ENCODE measurements at regions of chr1 and their contacts with region 1.

Region 1: DNA sequence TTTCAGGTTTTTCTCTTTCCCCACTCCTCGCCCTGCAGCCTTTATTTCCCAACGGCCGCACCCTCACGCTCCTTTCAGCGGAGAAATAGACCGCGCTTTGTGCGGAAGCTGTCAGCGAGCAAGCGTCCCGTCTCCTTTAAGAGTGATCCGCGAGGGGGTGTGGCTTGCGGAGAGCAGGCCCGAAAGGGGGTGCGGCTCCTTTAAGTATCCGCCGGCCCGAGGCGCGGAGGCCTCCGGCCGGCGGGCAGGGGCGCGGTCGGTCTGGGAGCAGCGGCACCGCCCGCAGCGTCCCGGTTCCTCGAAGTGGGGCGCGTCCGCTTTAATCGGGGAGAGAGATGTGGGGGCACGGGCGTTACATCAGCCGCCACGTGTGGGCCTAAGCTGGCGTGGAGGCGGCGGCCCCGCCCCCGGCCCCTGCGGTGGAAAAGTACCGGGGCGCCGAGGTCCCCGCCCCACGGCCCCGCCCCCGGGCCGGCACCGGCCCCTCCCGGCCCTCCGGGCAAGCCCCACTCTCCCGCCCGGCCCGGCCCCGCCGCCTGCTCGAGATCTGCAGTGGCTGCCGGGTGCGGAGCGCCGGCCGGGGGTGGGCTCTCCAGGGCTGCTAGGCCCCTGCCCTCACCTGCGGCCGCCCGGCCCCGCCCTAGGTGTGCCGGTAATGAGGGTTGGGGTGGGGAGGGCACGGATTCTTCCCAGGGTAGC is 1.2 kb downstream of the SLC6A9 start:
- DNase-seq: peak; percentile 80 to 93
- H3K4me3 ChIP-seq: peak overlapping the region; percentile 97
- H3K27ac ChIP-seq: peak overlapping the region; percentile 91
- H3K4me1 ChIP-seq: peaks cover 57% of the 10 kb centered on the region
- H3K27me3 ChIP-seq: no peaks in the 10 kb centered on the region
- CTCF ChIP-seq: no peak

Region 2: GRCh38 chr1:43454266-43455011 is 575.6 kb before region 1 on chr1:
- CTCF ChIA-PET with region 1: no interaction called
- POLR2A ChIA-PET with region 1: no interaction called
- intact Hi-C with region 1: loop called (anchors 10 kb)
- DNase-seq: peak; percentile 77 to 89
- H3K4me3 ChIP-seq: peak overlapping the region; percentile 71
- H3K27ac ChIP-seq: peak overlapping the region; percentile 70
- H3K4me1 ChIP-seq: peaks cover 11% of the 10 kb centered on the region
- H3K27me3 ChIP-seq: no peaks in the 10 kb centered on the region
- CTCF ChIP-seq: no peak

Region 3: DNA sequence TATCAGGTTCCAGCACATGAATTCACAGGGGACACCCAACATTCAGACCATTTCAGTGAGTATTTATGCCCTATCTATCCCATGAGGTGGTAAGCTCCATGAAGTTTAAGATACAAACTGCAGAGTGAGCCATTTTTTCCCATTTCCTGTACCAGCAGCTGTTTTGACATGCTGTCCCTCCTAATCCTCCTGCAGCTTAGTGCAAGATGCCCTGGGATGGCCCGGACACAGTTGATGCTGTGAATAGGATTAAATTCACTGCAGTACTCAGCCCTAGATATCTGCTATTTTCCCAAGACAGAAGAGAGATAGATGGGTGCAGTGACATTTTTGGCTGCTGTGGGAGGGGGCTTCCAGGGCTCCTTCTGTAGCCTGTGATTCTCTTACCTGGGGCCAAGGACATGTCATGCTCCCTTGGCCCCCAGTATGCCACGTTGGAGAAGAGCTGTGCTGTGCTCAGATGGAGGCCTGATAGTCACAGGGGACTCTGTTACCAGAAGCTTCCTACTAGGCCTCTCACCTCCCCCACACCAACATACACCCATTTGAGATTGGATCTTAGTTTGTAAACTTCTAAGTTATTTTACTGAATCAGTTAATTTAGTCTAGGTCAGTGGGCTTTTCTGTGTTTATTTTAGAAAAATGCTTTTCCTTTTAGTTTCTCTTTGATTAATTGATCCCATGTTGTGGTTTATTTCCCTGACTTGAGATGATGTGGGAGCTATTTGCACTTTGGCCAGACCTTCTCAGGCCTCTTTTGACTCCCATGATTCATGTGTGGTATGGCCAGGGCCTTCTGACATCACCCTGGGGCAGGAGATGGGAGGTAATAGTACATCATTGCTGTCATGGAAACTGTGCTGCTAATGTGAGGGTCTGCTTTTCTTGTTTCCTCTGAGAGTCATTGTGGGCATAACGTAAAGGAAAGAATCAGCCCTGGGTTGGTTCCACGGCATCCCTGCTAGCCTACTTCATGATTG is 230.1 kb before region 1 on chr1:
- CTCF ChIA-PET with region 1: no interaction called
- POLR2A ChIA-PET with region 1: no interaction called
- intact Hi-C with region 1: no loop called
- DNase-seq: no peak
- H3K4me3 ChIP-seq: no peak overlapping the region
- H3K27ac ChIP-seq: no peak overlapping the region
- H3K4me1 ChIP-seq: no peaks in the 10 kb centered on the region
- H3K27me3 ChIP-seq: no peaks in the 10 kb centered on the region
- CTCF ChIP-seq: no peak

Region 4: DNA sequence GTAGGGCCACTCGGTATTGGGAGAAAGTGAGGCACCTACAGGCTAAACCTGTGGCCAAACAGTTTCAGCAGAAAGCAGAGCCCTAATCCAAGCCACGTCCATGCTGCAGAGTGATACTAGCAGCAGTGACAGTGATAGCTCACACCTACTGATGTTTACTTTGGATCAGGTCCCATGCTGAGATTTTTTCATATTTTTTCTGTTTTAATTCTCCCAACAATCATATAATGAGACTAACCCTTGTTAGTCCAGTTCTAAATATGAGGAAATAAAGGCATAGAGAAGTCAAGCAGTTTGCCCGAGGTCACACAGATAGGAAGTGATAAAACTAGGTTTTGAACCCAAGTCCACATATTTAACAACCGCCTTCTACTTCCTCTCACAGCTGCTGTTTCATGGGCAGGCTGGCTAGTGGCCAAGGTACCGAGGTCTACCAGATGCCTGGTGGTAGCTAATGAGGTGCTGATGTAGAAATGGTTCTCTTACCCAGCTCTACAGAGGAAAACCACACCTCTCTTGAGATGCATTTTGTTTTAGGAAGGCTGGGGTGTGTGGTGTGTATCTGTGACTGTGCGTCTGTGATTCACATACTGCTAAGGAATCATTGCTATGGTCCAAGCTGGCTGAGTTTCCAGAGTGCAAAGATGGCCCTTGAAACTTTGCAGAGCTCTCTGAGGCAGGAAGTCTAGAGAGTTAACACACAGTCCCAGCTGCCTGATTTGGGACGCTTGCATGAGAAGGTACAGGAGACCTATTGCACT is 176.7 kb before region 1 on chr1:
- CTCF ChIA-PET with region 1: no interaction called
- POLR2A ChIA-PET with region 1: no interaction called
- intact Hi-C with region 1: loop called (anchors 10 kb)
- DNase-seq: peak; percentile 79 to 83
- H3K4me3 ChIP-seq: no peak overlapping the region
- H3K27ac ChIP-seq: peak overlapping the region; percentile 54
- H3K4me1 ChIP-seq: peaks cover 31% of the 10 kb centered on the region
- H3K27me3 ChIP-seq: no peaks in the 10 kb centered on the region
- CTCF ChIP-seq: no peak

Region 5: DNA sequence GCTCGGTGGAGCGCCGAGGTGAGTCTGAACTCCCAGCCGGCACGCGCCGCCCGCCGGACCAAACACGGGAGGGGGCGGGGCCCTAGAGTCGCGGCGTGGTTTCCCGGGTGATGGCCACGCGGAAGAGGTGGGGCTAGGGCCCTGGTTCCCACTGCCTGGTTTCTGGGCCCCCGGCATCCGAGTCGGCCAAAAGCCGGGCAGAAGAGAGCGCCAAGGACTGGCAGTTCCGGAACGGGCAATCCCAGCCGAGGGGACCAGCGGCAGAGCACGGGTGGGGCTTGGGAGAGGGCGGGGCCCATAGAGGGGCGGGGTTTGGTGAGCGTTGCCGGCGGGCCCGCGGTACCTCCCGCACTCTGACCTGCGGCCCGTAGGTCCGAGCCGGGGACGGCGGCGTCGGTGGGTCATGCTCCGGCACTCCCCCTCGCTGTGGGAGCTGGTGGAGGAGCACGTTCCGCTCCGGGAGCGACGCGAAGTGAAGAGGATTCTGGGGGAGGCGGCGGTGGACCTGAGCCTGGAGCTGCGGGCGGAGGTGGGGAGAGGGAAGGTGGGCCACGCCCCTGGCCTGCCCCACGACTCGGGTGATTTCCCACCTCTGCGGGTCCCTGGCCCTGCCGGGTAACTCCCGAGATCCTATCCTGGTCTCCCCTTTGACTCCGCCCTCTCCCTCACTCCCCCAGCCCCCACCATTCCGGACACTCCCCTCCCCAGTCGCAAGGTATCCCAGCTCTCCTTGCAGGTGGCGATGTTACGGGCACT is 38.4 kb before region 1 on chr1 and contains the start of gene CCDC24:
- CTCF ChIA-PET with region 1: interaction called, 6 read pairs
- POLR2A ChIA-PET with region 1: interaction called, 9 read pairs
- intact Hi-C with region 1: loop called (anchors 5 kb)
- DNase-seq: peak; percentile 85 to 96
- H3K4me3 ChIP-seq: peak within 1 kb of the TSS; percentile 59
- H3K27ac ChIP-seq: peak within 1 kb of the TSS; percentile 86
- H3K4me1 ChIP-seq: peaks cover 25% of the 10 kb centered on the region
- H3K27me3 ChIP-seq: no peaks in the 10 kb centered on the region
- CTCF ChIP-seq: no peak
- total RNA-seq, gene CCDC24: 47.9 and 56.5 TPM in 2 replicates

Region 6: DNA sequence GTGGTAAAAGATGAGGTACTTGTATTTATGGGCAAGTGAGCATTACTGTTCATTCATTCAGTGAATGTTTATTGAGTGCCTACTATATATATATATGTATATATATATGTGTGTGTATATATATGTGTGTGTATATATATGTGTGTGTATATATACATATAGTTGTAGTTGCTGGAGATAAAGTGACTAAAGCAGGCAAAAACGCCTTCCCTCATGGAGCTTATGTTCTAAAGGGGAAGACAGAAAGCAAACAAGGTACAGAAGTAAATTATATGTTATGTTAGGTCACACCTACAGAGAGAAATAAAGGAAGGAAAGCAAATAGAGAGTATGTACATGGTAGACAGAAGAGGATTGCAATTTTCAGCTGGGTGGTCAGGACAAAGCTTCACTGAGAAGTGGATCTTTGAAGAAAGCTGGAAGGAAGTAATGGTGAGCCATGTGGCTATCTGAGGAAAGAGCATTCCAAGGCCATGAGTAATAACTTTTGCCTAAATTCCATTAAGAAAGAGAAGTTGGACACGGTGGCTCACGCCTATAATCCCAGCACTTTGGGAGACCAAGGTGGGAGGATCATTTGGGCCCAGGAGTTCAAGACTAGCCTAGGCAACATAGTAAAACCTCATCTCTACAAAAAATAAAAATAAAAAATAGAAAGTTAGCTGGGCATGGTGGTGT is 55.1 kb after region 1 on chr1:
- CTCF ChIA-PET with region 1: no interaction called
- POLR2A ChIA-PET with region 1: no interaction called
- intact Hi-C with region 1: no loop called
- DNase-seq: peak; percentile 26 to 79
- H3K4me3 ChIP-seq: no peak overlapping the region
- H3K27ac ChIP-seq: no peak overlapping the region
- H3K4me1 ChIP-seq: peaks cover 7% of the 10 kb centered on the region; the same call in 1 of the 2 replicates
- H3K27me3 ChIP-seq: no peaks in the 10 kb centered on the region
- CTCF ChIP-seq: no peak

Region 7: DNA sequence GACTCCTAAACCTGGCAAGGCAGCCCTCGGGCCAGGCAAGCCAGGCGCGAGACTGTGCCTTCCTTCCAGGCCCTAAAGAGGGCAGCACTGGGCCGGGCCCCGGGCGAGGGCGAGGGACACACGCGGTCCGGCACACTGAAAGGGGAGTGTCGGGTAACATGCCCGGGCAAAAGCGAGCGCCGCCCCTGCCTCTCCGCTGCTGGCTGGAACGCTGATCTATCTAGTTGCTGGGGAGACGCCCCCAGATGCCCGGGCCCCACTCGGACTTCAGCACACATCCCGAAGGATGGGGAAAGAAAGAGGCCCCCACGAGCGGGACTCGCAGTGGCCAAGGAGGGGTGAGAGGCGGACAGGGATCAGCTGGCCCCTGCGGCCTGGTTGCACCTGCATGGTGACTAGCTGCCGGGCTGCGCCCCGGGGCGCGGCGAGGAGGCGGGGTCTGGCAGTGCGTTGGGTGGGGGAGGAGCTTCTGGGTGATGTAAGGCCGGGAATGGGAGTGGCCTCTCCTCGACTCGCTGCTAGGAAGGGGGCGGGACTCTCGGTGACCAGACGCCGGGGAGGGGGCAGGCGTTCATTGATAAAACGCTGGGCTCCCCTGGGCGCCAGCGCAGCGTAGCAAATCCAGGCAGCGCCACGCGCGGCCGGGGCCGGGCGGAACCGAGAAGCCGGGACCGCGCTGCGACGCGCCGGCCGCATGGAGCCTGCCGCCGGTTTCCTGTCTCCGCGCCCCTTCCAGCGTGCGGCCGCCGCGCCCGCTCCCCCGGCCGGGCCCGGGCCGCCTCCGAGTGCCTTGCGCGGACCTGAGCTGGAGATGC is 769.9 kb after region 1 on chr1 and contains the start of gene PLK3:
- CTCF ChIA-PET with region 1: no interaction called
- POLR2A ChIA-PET with region 1: no interaction called
- intact Hi-C with region 1: loop called (anchors 10 kb)
- DNase-seq: peak; percentile 88 to 99
- H3K4me3 ChIP-seq: peak within 1 kb of the TSS; percentile 82
- H3K27ac ChIP-seq: peak within 1 kb of the TSS; percentile 81
- H3K4me1 ChIP-seq: peaks cover 45% of the 10 kb centered on the region
- H3K27me3 ChIP-seq: no peaks in the 10 kb centered on the region
- CTCF ChIP-seq: peak; percentile 88
- total RNA-seq, gene PLK3: 12.7 and 13.0 TPM in 2 replicates

Measured in PC-9 (cell line).